PC-3 (cell line): ENCODE measurements at regions of chr1 and their contacts with region 1.

Region 1: DNA sequence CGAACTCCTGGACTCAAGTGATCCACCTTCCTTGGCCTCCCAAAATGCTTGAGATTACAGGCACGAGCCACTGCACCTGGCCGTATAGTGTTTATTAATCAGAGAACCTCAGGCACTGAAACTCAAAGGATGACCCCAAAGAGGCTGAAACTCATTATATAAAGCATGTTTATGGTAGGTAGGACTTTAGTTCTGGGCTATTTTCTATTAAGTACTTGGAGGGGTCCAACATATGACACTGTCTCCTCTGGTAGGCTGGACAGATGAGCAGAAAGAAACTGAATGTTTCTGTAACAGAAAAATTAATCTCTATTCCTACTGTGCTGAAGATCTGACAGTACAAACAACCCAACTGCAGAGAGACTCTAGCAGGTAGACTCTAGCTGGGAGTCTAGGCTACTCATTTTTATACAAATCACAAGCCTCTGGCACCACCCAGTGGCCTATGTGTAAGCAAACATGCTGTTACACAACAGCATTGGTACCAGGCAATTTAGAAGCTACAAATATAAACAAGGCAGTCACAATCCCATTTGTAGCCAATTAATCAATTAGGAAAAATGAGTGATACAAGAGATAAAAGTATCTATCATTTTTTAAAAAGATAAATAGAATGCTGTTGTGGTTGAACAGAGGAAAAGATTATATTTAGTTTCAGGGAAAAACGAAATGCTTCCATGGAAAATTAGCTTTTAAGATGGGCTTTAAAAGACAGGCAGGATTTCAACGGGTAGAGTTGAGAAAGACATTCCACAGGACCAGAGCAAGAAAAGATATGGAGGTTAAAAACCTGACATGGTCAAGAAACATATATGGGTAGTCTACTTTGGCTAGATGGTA is 10.4 kb downstream of the DCAF8 start:
- DNase-seq: peak; percentile 86
- ATAC-seq: peak; percentile 99
- H3K4me3 ChIP-seq: no peak overlapping the region
- H3K27ac ChIP-seq: no peak overlapping the region
- H3K4me1 ChIP-seq: peaks cover 6% of the 10 kb centered on the region
- H3K27me3 ChIP-seq: no peaks in the 10 kb centered on the region
- CTCF ChIP-seq: peak; percentile 96

Region 2: GRCh38 chr1:160219062-160219929 is 32.6 kb before region 1 on chr1:
- CTCF ChIA-PET with region 1: interaction called, 29 read pairs
- POLR2A ChIA-PET with region 1: no interaction called
- intact Hi-C with region 1: loop called (anchors 2 kb)
- DNase-seq: peak; percentile 73
- ATAC-seq: peak; percentile 85
- H3K4me3 ChIP-seq: no peak overlapping the region
- H3K27ac ChIP-seq: no peak overlapping the region
- H3K4me1 ChIP-seq: no peaks in the 10 kb centered on the region
- H3K27me3 ChIP-seq: no peaks in the 10 kb centered on the region
- CTCF ChIP-seq: peak; percentile 83

Region 3: GRCh38 chr1:160261893-160262794 is 10.2 kb after region 1 on chr1 and contains the start of gene DCAF8:
- CTCF ChIA-PET with region 1: interaction called, 12 read pairs
- POLR2A ChIA-PET with region 1: interaction called, 8 read pairs
- intact Hi-C with region 1: no loop called
- DNase-seq: peak; percentile 99
- ATAC-seq: peak; percentile 88
- H3K4me3 ChIP-seq: peak within 1 kb of the TSS; percentile 90
- H3K27ac ChIP-seq: peak within 1 kb of the TSS; percentile 93
- H3K4me1 ChIP-seq: peaks cover 39% of the 10 kb centered on the region
- H3K27me3 ChIP-seq: no peaks in the 10 kb centered on the region
- CTCF ChIP-seq: no peak
- total RNA-seq, gene DCAF8: 122 and 139 TPM in 2 replicates

Region 4: GRCh38 chr1:160291248-160292220 is 39.6 kb after region 1 on chr1:
- CTCF ChIA-PET with region 1: interaction called, 21 read pairs
- POLR2A ChIA-PET with region 1: no interaction called
- intact Hi-C with region 1: no loop called
- DNase-seq: peak; percentile 80
- ATAC-seq: peak; percentile 87
- H3K4me3 ChIP-seq: no peak overlapping the region
- H3K27ac ChIP-seq: no peak overlapping the region
- H3K4me1 ChIP-seq: peaks cover 4% of the 10 kb centered on the region; the same call in 1 of the 2 replicates
- H3K27me3 ChIP-seq: no peaks in the 10 kb centered on the region
- CTCF ChIP-seq: peak; percentile 92

Region 5: GRCh38 chr1:160354388-160354985 is 102.6 kb after region 1 on chr1:
- CTCF ChIA-PET with region 1: no interaction called
- POLR2A ChIA-PET with region 1: no interaction called
- intact Hi-C with region 1: no loop called
- DNase-seq: peak; percentile 37
- ATAC-seq: peak; percentile 48; the same call in 1 of the 2 replicates
- H3K4me3 ChIP-seq: no peak overlapping the region
- H3K27ac ChIP-seq: no peak overlapping the region
- H3K4me1 ChIP-seq: no peaks in the 10 kb centered on the region
- H3K27me3 ChIP-seq: no peaks in the 10 kb centered on the region
- CTCF ChIP-seq: peak; percentile 84

Region 6: GRCh38 chr1:160625725-160626498 is 374.0 kb after region 1 on chr1:
- CTCF ChIA-PET with region 1: no interaction called
- POLR2A ChIA-PET with region 1: no interaction called
- intact Hi-C with region 1: no loop called
- DNase-seq: no peak
- ATAC-seq: no peak
- H3K4me3 ChIP-seq: no peak overlapping the region
- H3K27ac ChIP-seq: no peak overlapping the region
- H3K4me1 ChIP-seq: no peaks in the 10 kb centered on the region
- H3K27me3 ChIP-seq: peaks cover 87% of the 10 kb centered on the region
- CTCF ChIP-seq: no peak